Activated B cell treated with CpG ODN at 0.5 μM for 24 hours (primary cell): ENCODE measurements at regions of chr6 and their contacts with region 1.

Region 1: GRCh38 chr6:43143235-43144124 is 27.6 kb upstream of the SRF start:
- DNase-seq: peak; percentile 70
- ATAC-seq: peak; percentile 99
- H3K4me3 Mint-ChIP-seq: peak overlapping the region; percentile 39
- H3K27ac Mint-ChIP-seq: no peak overlapping the region
- H3K4me1 Mint-ChIP-seq: peaks cover 4% of the 10 kb centered on the region
- H3K27me3 Mint-ChIP-seq: peaks cover 4% of the 10 kb centered on the region
- CTCF ChIP-seq: no peak

Region 2: DNA sequence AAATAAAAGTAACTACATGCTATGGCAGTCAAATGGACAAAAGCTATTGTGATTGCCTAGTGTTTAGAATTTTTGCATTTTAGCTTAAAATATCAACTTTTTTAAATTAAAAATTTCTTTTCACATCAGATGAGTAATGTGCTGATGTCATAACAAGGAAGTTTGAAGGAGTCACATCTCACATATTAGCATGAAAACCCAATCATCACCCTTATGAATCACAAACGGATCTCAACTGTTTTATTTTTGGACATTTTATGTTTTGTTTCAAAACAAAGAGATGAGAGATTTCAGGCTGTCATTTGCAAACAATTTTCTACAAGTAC is 638.1 kb before region 1 on chr6:
- CTCF ChIA-PET with region 1: no interaction called
- POLR2A ChIA-PET with region 1: no interaction called
- intact Hi-C with region 1: no loop called
- DNase-seq: no peak
- ATAC-seq: peak; percentile 41
- H3K4me3 Mint-ChIP-seq: no peak overlapping the region
- H3K27ac Mint-ChIP-seq: peak overlapping the region; percentile 35
- H3K4me1 Mint-ChIP-seq: peaks cover 29% of the 10 kb centered on the region
- H3K27me3 Mint-ChIP-seq: no peaks in the 10 kb centered on the region
- CTCF ChIP-seq: no peak

Region 3: GRCh38 chr6:42661540-42662153 is 481.8 kb before region 1 on chr6:
- CTCF ChIA-PET with region 1: interaction called, 6 read pairs
- POLR2A ChIA-PET with region 1: no interaction called
- intact Hi-C with region 1: loop called (anchors 10 kb)
- DNase-seq: peak; percentile 65
- ATAC-seq: peak; percentile 96
- H3K4me3 Mint-ChIP-seq: no peak overlapping the region
- H3K27ac Mint-ChIP-seq: no peak overlapping the region
- H3K4me1 Mint-ChIP-seq: no peaks in the 10 kb centered on the region
- H3K27me3 Mint-ChIP-seq: no peaks in the 10 kb centered on the region
- CTCF ChIP-seq: peak; percentile 74

Region 4: DNA sequence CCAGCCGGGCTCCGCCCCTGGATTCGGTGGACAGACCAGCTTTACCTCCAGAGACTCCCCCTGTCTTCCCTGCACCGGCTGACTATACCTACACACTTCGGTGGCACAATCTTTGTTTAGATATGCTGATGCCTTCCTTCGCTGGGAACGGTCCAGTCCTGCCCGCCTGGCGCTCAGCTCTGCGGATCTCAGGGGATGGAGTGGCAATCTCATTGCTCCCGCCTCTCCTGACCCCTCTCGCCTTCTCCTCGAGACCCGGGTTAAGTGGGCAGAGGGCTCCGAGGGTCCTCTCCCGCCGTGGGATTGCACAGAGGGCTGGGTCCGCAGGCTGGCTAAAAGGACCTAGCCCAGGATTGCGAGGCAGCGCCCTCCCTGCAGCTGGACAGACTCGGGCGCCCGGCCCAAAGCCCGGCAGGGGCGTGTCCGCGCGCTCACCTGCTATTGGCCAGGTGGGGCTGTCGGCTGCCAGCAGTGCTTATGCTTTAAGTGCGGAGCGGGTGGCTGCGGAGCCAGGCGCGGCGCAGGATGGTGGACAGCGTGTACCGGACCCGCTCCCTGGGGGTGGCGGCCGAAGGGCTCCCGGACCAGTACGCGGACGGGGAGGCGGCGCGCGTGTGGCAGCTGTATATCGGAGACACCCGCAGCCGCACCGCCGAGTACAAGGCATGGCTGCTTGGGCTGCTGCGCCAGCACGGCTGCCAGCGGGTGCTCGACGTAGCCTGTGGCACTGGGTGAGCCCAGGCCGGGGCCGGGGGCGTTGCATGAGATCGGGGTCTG is 183.0 kb before region 1 on chr6 and contains the start of gene GNMT:
- CTCF ChIA-PET with region 1: interaction called, 5 read pairs
- POLR2A ChIA-PET with region 1: no interaction called
- intact Hi-C with region 1: loop called (anchors 2 kb)
- DNase-seq: peak; percentile 47
- ATAC-seq: peak; percentile 83
- H3K4me3 Mint-ChIP-seq: peak within 1 kb of the TSS; percentile 70
- H3K27ac Mint-ChIP-seq: peak within 1 kb of the TSS; percentile 7
- H3K4me1 Mint-ChIP-seq: peaks cover 14% of the 10 kb centered on the region
- H3K27me3 Mint-ChIP-seq: no peaks in the 10 kb centered on the region
- CTCF ChIP-seq: no peak
- total RNA-seq, gene GNMT: 1.7 and 2.3 TPM in 2 replicates

Region 5: DNA sequence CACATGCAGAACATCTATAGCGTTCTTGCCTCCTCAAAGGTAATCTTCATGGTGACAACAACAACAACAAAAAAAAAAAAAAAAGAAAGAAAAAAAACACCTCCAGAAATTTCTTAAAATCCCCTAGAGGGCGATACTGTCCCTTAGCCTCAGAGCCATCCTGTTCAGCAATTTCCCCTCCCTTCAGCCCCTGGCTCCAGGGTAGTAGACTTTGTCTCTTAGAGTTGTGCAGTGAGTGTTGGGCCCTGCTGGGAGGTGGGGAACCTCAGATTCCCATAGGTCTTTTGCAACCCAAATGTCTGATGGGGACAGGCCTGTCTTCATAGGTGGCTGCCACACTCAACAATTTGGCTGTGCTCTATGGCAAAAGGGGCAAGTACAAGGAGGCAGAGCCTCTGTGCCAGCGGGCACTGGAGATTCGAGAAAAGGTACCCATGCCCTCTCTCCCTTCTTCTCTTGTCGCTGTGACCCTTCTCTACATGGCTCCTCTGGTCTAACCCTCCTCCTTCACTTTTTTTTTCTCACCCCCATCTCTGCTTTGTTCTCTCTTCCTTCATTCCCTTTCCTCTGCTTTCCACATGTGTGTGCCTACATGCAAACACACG is 73.3 kb before region 1 on chr6:
- CTCF ChIA-PET with region 1: no interaction called
- POLR2A ChIA-PET with region 1: no interaction called
- intact Hi-C with region 1: loop called (anchors 1 kb)
- DNase-seq: no peak
- ATAC-seq: peak; percentile 42
- H3K4me3 Mint-ChIP-seq: no peak overlapping the region
- H3K27ac Mint-ChIP-seq: no peak overlapping the region
- H3K4me1 Mint-ChIP-seq: no peaks in the 10 kb centered on the region
- H3K27me3 Mint-ChIP-seq: no peaks in the 10 kb centered on the region
- CTCF ChIP-seq: no peak